Left lung (tissue), 14 donors: ENCODE measurements at regions of chr12 and their contacts with region 1.

Region 1: GRCh38 chr12:70733385-70733784 is 96.2 kb upstream of the PTPRB start:
- DNase-seq: peak in 1 of 4 donors; percentile 75
- ATAC-seq: peak; percentile 95
- H3K4me3 ChIP-seq: no peak overlapping the region
- H3K27ac ChIP-seq: no peak overlapping the region
- H3K4me1 ChIP-seq: no peaks in the 10 kb centered on the region
- H3K27me3 ChIP-seq: no peaks in the 10 kb centered on the region
- CTCF ChIP-seq: peak; percentile 59 to 62

Region 2: GRCh38 chr12:70849265-70849960 is 116.0 kb after region 1 on chr12:
- intact Hi-C with region 1: loop called in 1 of 2 experiments (anchors 5 kb)
- DNase-seq: peak in 1 of 4 donors; percentile 35
- ATAC-seq: peak; percentile 76
- H3K4me3 ChIP-seq: no peak overlapping the region
- H3K27ac ChIP-seq: no peak overlapping the region
- H3K4me1 ChIP-seq: peaks cover 0 to 10% of the 10 kb centered on the region in 2 donors
- H3K27me3 ChIP-seq: no peaks in the 10 kb centered on the region
- CTCF ChIP-seq: peak; percentile 10 to 18

Region 3: DNA sequence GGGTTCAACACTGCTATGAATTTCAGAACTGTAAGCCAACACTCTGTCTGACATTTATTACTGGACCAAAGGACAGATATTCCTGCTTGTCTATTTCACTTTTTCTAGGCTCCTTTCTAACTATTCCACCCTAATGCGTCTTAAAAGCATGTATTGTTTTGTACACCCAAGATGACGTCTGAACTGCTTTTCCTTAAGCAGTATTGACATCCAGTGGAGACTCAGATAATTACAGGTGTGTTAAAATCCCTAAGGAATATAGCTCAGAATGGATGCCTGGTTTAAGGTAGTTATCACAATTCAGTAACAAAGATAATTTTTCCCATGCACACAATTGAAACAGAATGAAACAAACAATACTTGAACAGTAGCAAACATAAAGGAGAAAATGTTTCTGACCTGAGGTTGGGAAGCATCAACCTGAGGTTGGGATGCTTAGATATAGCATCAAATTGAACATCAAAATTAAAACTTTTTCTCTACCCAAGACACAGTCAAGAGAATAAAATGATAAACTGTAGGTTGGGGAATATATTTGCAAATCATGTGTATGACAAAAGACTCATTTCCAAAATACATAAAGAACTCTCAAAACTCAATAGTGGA is 280.9 kb after region 1 on chr12:
- intact Hi-C with region 1: loop called in 1 of 2 experiments (anchors 10 kb)
- DNase-seq: peak in 1 of 4 donors; percentile 46
- ATAC-seq: peak; percentile 91
- H3K4me3 ChIP-seq: no peak overlapping the region
- H3K27ac ChIP-seq: no peak overlapping the region
- H3K4me1 ChIP-seq: no peaks in the 10 kb centered on the region
- H3K27me3 ChIP-seq: peaks cover 0 to 22% of the 10 kb centered on the region in 2 donors
- CTCF ChIP-seq: peak; percentile 18 to 29